ENCODE measurements at regions of chr16 and their contacts with region 1.

Region 1: DNA sequence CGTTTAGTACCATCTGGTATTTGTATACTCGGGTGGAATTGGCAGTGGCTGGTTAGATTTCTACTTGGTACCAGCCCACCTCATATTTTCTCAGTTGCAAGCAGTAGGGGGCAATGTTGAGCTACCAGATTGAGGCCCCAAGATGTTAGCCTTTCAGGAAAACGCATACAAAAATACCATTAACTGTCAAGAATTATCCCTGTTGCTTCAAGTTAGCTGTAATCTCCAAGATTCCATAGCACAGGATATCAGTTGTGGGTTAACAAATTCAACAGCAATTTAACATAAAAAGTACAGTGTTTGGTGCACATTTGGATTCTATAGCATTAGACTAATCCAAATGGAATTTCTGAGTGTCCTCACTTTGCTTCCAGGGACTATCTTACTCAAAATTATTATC is 188.2 kb downstream of the FTO start:
- DNase-seq: peak in 7 of 9 experiments; percentile 5 to 66 (median 40)
- ATAC-seq: no peak
- H3K4me3 ChIP-seq: no peak overlapping the region
- H3K4me3 Mint-ChIP-seq: no peak overlapping the region
- H3K27ac ChIP-seq: no peak overlapping the region
- H3K27ac Mint-ChIP-seq: no peak overlapping the region
- H3K4me1 ChIP-seq: no peaks in the 10 kb centered on the region
- H3K4me1 Mint-ChIP-seq: peaks cover 2% of the 10 kb centered on the region
- H3K27me3 ChIP-seq: no peaks in the 10 kb centered on the region
- H3K27me3 Mint-ChIP-seq: no peaks in the 10 kb centered on the region
- CTCF ChIP-seq: peak; percentile 71

Region 2: GRCh38 chr16:53855511-53855910 is 36.6 kb before region 1 on chr16:
- CTCF ChIA-PET with region 1: no interaction called
- POLR2A ChIA-PET with region 1: no interaction called
- intact Hi-C with region 1: no loop called
- DNase-seq: no peak
- ATAC-seq: no peak
- H3K4me3 ChIP-seq: no peak overlapping the region
- H3K4me3 Mint-ChIP-seq: no peak overlapping the region
- H3K27ac ChIP-seq: no peak overlapping the region
- H3K27ac Mint-ChIP-seq: no peak overlapping the region
- H3K4me1 ChIP-seq: no peaks in the 10 kb centered on the region
- H3K4me1 Mint-ChIP-seq: no peaks in the 10 kb centered on the region
- H3K27me3 ChIP-seq: no peaks in the 10 kb centered on the region
- H3K27me3 Mint-ChIP-seq: no peaks in the 10 kb centered on the region
- CTCF ChIP-seq: no peak

Region 3: DNA sequence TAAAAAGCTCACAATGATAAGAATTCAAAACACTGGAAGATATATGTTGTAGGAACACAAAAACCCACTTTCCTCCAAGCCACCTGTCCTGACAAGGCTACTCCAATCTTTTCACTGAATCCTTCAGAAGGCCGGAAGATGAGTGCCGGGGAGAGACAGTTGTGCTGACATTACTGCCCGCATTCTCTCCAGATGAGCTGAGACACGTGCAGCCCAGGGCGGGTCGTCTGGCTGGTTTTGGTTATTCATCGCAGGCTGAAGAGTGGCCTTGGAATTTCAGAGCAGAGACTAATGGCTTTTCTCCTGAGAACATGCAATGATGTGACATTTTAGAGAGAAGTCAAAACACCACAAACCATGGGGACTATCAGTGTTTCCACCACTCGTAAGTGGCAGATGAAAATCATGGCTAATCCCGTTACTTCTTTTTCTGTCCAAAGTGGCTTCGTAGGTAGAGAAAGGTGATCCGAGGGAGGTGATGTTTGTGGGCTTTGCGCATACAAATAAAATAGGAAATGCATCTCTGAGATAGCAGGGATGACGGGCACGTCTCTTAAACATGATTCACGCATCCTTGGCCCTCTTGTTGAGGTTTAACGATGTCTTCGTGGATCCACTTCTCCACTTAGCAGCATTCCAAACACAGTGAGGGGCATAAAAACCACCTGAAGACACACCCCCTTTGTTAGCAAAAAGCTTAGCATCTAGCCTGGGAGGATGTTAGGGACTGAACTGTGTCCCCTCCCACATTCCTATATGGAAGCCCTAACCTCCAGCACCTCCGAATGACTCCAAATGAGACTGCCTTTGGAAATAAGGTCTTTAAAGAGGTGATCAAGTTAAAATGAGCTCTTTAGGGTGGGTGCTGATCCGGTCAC is 260.4 kb after region 1 on chr16:
- CTCF ChIA-PET with region 1: no interaction called
- POLR2A ChIA-PET with region 1: no interaction called
- intact Hi-C with region 1: loop called in 1 of 2 experiments (anchors 10 kb)
- DNase-seq: no peak
- ATAC-seq: no peak
- H3K4me3 ChIP-seq: no peak overlapping the region
- H3K4me3 Mint-ChIP-seq: no peak overlapping the region
- H3K27ac ChIP-seq: no peak overlapping the region
- H3K27ac Mint-ChIP-seq: no peak overlapping the region
- H3K4me1 ChIP-seq: no peaks in the 10 kb centered on the region
- H3K4me1 Mint-ChIP-seq: no peaks in the 10 kb centered on the region
- H3K27me3 ChIP-seq: no peaks in the 10 kb centered on the region
- H3K27me3 Mint-ChIP-seq: peaks cover 3% of the 10 kb centered on the region
- CTCF ChIP-seq: no peak

Region 4: DNA sequence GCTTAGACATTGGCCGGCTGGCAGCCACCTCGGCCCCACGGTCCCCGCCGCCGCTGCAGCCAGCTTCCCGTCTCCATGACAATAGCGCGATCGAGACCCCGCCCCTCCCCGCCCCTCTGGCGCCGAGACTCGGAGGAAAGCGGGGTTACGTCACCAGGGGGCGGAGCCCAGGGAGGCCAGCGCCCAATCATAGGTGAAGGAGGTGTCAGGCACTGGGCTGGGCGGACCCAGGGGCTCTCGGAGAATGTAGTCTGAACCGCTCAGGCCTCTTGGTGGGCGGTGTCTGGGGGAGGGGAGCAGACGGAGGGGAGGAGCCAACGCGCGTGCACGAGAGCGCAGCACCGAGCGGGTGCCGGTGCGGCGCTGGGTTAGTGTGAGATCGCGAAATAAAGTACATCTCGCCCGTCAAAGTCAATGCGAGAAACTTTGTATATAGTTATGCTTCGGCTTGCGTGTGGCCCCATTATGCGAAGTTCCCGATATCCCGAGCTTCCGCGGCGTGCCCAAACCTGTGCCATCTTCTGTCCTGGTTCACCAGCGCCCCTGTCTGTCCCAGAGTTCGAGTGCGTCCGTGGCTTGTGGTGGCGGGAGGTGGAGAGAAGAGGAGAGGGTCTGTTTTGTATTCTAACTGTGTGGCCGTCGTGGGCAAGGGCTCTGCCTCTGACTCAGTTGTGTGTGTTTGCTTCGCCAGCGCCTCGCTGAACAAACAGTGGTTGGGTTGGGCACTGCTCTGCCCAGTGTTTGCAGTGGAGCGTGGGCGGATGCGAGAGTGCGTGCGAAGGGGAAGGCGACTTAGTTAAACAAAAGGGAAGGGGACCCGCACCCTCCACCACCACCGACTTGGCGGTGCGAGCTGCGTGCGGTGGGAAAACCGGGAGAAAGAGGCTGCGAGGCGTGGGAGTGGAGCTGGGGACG is 1037.2 kb after region 1 on chr16:
- CTCF ChIA-PET with region 1: no interaction called
- POLR2A ChIA-PET with region 1: no interaction called
- intact Hi-C with region 1: no loop called
- DNase-seq: peak; percentile 82 to 95 (median 91)
- ATAC-seq: peak; percentile 96
- H3K4me3 ChIP-seq: peak overlapping the region; percentile 46 to 48
- H3K4me3 Mint-ChIP-seq: peak overlapping the region; percentile 90
- H3K27ac ChIP-seq: no peak overlapping the region
- H3K27ac Mint-ChIP-seq: peak overlapping the region; percentile 64
- H3K4me1 ChIP-seq: peaks cover 28% of the 10 kb centered on the region
- H3K4me1 Mint-ChIP-seq: peaks cover 33% of the 10 kb centered on the region
- H3K27me3 ChIP-seq: peaks cover 38 to 51% of the 10 kb centered on the region in 2 experiments
- H3K27me3 Mint-ChIP-seq: peaks cover 61% of the 10 kb centered on the region
- CTCF ChIP-seq: no peak

Region 5: GRCh38 chr16:55842369-55843104 is 1950.4 kb after region 1 on chr16:
- CTCF ChIA-PET with region 1: no interaction called
- POLR2A ChIA-PET with region 1: no interaction called
- intact Hi-C with region 1: loop called in 1 of 2 experiments (anchors 5 kb)
- DNase-seq: peak in 5 of 9 experiments; percentile 5 to 61 (median 17)
- ATAC-seq: no peak
- H3K4me3 ChIP-seq: no peak overlapping the region
- H3K4me3 Mint-ChIP-seq: no peak overlapping the region
- H3K27ac ChIP-seq: no peak overlapping the region
- H3K27ac Mint-ChIP-seq: no peak overlapping the region
- H3K4me1 ChIP-seq: no peaks in the 10 kb centered on the region
- H3K4me1 Mint-ChIP-seq: no peaks in the 10 kb centered on the region
- H3K27me3 ChIP-seq: no peaks in the 10 kb centered on the region
- H3K27me3 Mint-ChIP-seq: peaks cover 14% of the 10 kb centered on the region
- CTCF ChIP-seq: peak; percentile 68

Measured in CD8-positive, alpha-beta T cell (primary cell).